ENCODE measurements at regions of chr22 and their contacts with region 1.

Region 1: GRCh38 chr22:36636916-36637315 is 66.6 kb downstream of the CACNG2 start:
- DNase-seq: no peak
- H3K4me3 ChIP-seq: no peak overlapping the region
- H3K27ac ChIP-seq: no peak overlapping the region
- H3K4me1 ChIP-seq: peaks cover 1% of the 10 kb centered on the region
- H3K27me3 ChIP-seq: no peaks in the 10 kb centered on the region
- CTCF ChIP-seq: no peak

Region 2: GRCh38 chr22:36569999-36570398 is 66.9 kb before region 1 on chr22:
- CTCF ChIA-PET with region 1: no interaction called
- dilution Hi-C with region 1: loop called (anchors 5 kb)
- in situ Hi-C with region 1: no loop called
- intact Hi-C with region 1: no loop called
- DNase-seq: peak; percentile 20
- H3K4me3 ChIP-seq: no peak overlapping the region
- H3K27ac ChIP-seq: no peak overlapping the region
- H3K4me1 ChIP-seq: no peaks in the 10 kb centered on the region
- H3K27me3 ChIP-seq: no peaks in the 10 kb centered on the region
- CTCF ChIP-seq: peak; percentile 11 to 52

Region 3: GRCh38 chr22:36954211-36954891 is 317.4 kb after region 1 on chr22:
- CTCF ChIA-PET with region 1: no interaction called
- dilution Hi-C with region 1: no loop called
- in situ Hi-C with region 1: no loop called
- intact Hi-C with region 1: no loop called
- DNase-seq: no peak
- H3K4me3 ChIP-seq: no peak overlapping the region
- H3K27ac ChIP-seq: no peak overlapping the region
- H3K4me1 ChIP-seq: no peaks in the 10 kb centered on the region
- H3K27me3 ChIP-seq: no peaks in the 10 kb centered on the region
- CTCF ChIP-seq: no peak